ENCODE measurements at regions of chr5 and their contacts with region 1.

Region 1: DNA sequence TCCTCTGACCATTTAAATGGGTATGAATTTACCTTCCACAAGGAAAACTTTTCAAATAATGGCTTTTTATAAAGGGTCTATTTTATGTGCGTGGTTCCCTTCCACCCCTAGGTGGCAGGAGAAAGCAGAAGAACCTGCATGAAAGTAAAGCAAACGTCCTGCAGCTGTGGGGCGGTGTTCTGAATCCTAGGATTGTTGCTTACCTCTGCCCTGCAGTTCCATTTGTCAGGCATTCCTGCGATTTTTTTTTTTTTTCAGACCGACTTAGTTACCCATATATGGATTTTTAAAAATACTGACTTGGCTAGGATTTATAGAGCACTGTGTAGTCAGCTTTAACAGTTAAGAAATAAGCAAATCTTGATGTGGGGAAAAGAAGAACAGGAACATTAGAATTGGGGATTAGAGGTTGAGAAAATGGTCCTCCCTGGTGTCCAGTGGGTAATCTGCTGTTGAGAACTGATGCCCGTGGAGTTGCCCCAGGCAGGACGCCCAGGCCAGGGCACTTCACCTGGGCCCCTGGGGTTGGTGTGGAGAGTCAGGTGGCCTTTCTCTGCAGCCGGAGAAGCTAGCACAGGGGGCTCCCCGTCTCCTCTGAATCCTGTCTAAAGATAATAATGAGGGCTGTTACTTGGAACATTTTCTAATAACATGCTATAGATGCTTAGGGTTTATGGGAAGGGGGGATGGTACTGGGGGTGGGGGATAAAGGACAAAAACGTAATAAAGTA is 30.4 kb upstream of the LTC4S start:
- DNase-seq: peak; percentile 50
- H3K4me3 ChIP-seq: no peak overlapping the region
- H3K27ac ChIP-seq: peak overlapping the region; percentile 38
- H3K4me1 ChIP-seq: peaks cover 92% of the 10 kb centered on the region
- H3K27me3 ChIP-seq: no peaks in the 10 kb centered on the region
- CTCF ChIP-seq: peak; percentile 95

Region 2: GRCh38 chr5:179484761-179485160 is 278.6 kb before region 1 on chr5:
- intact Hi-C with region 1: no loop called
- DNase-seq: no peak
- H3K4me3 ChIP-seq: no peak overlapping the region
- H3K27ac ChIP-seq: no peak overlapping the region
- H3K4me1 ChIP-seq: no peaks in the 10 kb centered on the region
- H3K27me3 ChIP-seq: peaks cover 62% of the 10 kb centered on the region
- CTCF ChIP-seq: no peak

Region 3: DNA sequence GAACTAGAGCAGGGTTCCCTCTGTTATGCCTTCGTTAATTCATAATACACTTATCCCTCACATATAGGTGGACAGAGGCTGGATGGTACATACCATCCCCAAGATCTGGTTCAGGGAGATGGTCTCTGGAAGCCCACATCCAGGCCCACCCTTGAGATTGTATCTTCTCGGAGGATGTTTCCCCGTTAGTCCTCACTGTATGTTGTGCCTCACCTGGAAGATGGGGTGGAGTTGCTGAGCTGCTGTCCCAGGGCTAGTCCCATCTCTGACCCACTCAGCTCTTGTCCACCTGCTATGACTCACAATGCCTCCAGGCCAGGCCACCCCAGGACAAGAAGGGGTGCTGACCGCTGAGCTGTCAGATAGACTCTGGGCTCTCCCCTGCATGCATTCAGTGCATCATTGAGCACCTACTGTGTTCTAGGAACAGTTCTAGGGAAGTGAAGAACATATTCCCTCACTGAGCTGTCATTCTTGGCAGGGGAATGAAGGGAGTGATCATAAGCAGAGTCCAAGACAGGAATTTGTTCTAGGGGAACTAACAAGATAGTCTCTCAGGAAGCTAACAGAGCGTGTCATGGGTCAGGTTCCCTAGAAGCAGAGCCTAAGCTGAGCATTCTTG is 82.5 kb before region 1 on chr5 and contains the start of gene CBY3:
- intact Hi-C with region 1: no loop called
- DNase-seq: no peak
- H3K4me3 ChIP-seq: no peak within 1 kb of the TSS
- H3K27ac ChIP-seq: no peak within 1 kb of the TSS
- H3K4me1 ChIP-seq: peaks cover 27% of the 10 kb centered on the region
- H3K27me3 ChIP-seq: no peaks in the 10 kb centered on the region
- CTCF ChIP-seq: no peak
- total RNA-seq, gene CBY3: not detected

Region 4: DNA sequence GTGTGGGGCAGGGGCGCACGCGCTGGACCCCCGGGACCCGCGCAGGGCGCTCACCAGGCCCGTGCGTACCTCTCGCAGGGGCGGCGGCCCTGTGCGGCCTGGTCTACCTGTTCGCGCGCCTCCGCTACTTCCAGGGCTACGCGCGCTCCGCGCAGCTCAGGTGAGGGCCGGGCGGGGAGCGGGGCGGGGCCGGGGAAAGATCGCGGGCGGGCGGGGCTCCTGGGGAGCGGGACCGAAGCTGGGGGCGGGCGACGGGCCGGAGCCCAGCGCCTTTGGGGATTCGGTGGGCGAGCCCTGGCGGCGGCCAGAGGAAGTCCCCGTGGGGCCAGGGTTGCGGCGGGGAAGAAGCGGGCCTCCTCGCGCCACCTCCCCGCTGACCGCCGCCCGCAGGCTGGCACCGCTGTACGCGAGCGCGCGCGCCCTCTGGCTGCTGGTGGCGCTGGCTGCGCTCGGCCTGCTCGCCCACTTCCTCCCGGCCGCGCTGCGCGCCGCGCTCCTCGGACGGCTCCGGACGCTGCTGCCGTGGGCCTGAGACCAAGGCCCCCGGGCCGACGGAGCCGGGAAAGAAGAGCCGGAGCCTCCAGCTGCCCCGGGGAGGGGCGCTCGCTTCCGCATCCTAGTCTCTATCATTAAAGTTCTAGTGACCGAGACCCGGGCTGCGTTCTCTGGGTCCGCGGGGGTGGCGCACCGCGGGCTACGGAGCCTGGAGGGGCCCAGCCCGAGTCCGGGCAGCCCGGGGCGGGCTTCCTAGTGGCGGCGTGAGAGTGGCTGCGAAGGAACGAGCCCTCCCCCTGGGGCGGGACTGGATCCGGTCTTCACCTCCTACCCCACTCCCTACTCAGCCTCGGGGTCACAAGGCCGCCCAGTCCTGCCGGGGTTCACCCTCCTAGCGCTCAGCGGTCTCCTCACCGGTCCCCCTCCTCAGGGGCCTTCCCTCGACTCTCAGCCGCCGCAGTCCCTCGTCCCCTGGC is 32.8 kb after region 1 on chr5:
- intact Hi-C with region 1: loop called (anchors 5 kb)
- DNase-seq: peak; percentile 85
- H3K4me3 ChIP-seq: peak overlapping the region; percentile 80
- H3K27ac ChIP-seq: peak overlapping the region; percentile 88
- H3K4me1 ChIP-seq: peaks cover 65% of the 10 kb centered on the region
- H3K27me3 ChIP-seq: no peaks in the 10 kb centered on the region
- CTCF ChIP-seq: peak; percentile 93

Measured in left ventricle myocardium inferior (tissue), 1 donor.